AG04450 (cell line): ENCODE measurements at regions of chr14 and their contacts with region 1.

Region 1: GRCh38 chr14:92585981-92586937 is 72.7 kb downstream of the RIN3 start:
- DNase-seq: peak; percentile 85
- H3K4me3 ChIP-seq: peak overlapping the region; percentile 18
- H3K27ac ChIP-seq: peak overlapping the region; percentile 75
- H3K27me3 ChIP-seq: no peaks in the 10 kb centered on the region
- CTCF ChIP-seq: no peak

Region 2: DNA sequence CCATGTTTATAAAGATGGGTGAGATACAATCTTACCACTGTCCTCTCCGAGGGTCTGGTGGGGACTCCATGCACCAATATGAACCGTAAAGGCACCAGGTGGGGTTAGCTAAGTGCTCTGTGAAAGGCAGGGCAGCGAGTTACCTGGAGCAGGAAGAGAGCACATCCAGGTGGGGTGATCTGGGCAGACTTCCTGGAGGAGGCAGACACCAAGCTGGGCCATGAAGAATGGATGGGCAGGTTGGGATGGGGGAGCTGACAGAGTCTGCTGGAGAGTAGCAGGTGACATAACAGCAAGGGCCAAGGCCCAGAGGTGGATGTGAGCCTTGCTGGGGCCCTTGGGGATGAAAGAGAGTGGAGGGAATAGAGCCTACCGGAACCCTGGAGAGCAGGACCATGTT is 26.8 kb before region 1 on chr14:
- CTCF ChIA-PET with region 1: no interaction called
- POLR2A ChIA-PET with region 1: no interaction called
- DNase-seq: no peak
- H3K4me3 ChIP-seq: no peak overlapping the region
- H3K27ac ChIP-seq: no peak overlapping the region
- H3K27me3 ChIP-seq: no peaks in the 10 kb centered on the region
- CTCF ChIP-seq: no peak

Region 3: GRCh38 chr14:92600318-92601053 is 14.2 kb after region 1 on chr14:
- CTCF ChIA-PET with region 1: interaction called, 16 read pairs
- POLR2A ChIA-PET with region 1: interaction called, 5 read pairs
- DNase-seq: no peak
- H3K4me3 ChIP-seq: no peak overlapping the region
- H3K27ac ChIP-seq: peak overlapping the region; percentile 68
- H3K27me3 ChIP-seq: no peaks in the 10 kb centered on the region
- CTCF ChIP-seq: peak; percentile 19; the same call in 1 of the 2 replicates

Region 4: DNA sequence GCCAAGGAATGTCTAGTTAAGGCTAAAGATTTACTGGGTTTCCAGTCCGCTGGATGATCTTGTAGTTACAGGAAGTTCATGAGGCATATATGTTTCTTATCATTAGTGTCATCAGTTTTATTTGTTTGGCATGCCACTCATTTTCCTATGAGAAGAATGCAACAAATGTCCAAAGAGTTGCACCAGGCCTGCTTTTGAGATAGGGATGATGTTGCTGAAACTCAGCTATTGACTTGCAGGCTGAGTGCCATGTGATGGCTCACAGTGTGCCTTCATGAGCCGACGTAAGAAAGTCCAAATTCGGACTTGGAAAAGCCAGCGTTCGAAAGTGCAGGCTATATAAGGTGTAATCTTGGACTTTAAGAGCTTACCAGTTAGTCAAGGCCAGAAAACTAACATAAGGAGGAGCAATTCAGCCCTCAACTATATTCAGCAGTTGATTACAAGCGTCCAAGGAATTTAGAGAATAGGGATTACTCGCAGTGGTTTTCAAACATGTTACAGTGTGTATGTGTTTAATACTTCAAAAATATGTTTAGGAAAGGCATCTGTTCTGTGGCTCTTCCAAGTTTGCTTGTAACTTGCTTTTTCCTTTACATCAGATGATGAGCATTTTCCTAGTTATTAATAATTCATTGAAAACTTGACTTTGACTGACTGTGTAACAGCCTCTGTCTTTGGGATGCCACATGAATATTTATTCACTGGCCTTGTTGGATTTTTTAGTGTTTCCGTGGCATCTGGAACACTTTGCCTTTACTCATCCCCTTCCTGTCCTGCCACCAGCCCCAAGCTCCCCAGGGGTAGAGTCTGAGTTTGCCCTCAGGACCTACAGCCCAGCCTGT is 60.9 kb after region 1 on chr14:
- CTCF ChIA-PET with region 1: no interaction called
- POLR2A ChIA-PET with region 1: interaction called, 10 read pairs
- DNase-seq: peak; percentile 84
- H3K4me3 ChIP-seq: no peak overlapping the region
- H3K27ac ChIP-seq: peak overlapping the region; percentile 100
- H3K27me3 ChIP-seq: no peaks in the 10 kb centered on the region
- CTCF ChIP-seq: no peak

Region 5: GRCh38 chr14:92680781-92681650 is 94.8 kb after region 1 on chr14:
- CTCF ChIA-PET with region 1: interaction called, 15 read pairs
- POLR2A ChIA-PET with region 1: no interaction called
- DNase-seq: peak; percentile 45
- H3K4me3 ChIP-seq: no peak overlapping the region
- H3K27ac ChIP-seq: peak overlapping the region; percentile 21
- H3K27me3 ChIP-seq: no peaks in the 10 kb centered on the region
- CTCF ChIP-seq: peak; percentile 98